ENCODE measurements at regions of chr12 and their contacts with region 1.

Region 1: GRCh38 chr12:56461235-56462159 is 6.9 kb upstream of the SPRYD4 start:
- DNase-seq: no peak
- H3K4me3 Mint-ChIP-seq: no peak overlapping the region
- H3K27ac Mint-ChIP-seq: no peak overlapping the region
- H3K4me1 Mint-ChIP-seq: no peaks in the 10 kb centered on the region
- H3K27me3 Mint-ChIP-seq: no peaks in the 10 kb centered on the region

Region 2: DNA sequence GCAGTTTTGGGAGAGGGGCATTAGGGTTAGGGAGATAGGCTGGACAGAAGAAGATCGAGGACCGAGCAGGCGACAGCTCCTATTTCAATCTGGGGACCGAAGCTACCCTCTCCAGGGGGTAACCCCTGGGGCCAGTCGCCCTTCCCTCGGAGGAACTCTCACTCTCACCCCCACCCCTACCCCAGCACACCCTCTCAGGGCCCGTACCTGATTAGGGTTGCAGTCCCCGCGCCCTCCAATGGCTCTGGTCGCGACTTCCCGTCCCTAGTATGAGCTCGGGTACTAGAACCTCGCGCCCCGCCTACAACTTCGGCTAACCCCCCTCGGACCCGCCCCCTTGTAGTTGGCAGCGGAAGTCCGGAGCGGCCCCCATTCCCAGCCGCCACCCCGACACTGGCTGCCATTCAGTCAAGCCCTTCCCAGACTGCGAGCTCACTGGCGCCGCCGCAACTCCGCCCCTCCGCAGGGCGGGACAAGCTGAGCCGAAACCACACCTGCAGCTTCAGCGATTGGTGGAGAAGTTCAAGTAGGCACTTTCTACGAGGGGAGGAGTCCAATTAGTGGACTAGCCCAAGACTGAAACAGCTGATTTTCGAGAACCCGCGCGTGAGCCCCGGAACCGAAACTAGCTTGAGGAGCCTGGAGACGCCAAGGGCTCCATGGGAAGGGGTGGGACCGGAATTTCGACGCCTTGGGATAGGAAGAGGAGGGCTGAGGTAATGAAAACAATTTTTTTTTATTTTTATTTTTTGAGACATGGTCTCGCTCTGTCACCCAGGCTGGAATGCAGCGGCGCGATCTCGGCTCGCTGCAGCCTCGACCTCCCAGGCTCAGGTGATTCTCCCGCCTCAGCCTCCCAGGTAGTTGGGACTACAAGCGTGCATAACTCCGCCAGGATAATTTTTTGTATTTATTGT is 101.4 kb before region 1 on chr12 and contains the start of gene STAT2:
- intact Hi-C with region 1: loop called (anchors 5 kb)
- DNase-seq: peak; percentile 100
- H3K4me3 Mint-ChIP-seq: peak within 1 kb of the TSS; percentile 89
- H3K27ac Mint-ChIP-seq: peak within 1 kb of the TSS; percentile 90
- H3K4me1 Mint-ChIP-seq: peaks cover 24% of the 10 kb centered on the region
- H3K27me3 Mint-ChIP-seq: no peaks in the 10 kb centered on the region
- total RNA-seq, gene STAT2: 70.3 and 75.0 TPM in 2 replicates

Region 3: GRCh38 chr12:56387152-56387736 is 74.3 kb before region 1 on chr12:
- intact Hi-C with region 1: no loop called
- DNase-seq: no peak
- H3K4me3 Mint-ChIP-seq: no peak overlapping the region
- H3K27ac Mint-ChIP-seq: no peak overlapping the region
- H3K4me1 Mint-ChIP-seq: no peaks in the 10 kb centered on the region
- H3K27me3 Mint-ChIP-seq: no peaks in the 10 kb centered on the region

Region 4: GRCh38 chr12:56831936-56832335 is 370.4 kb after region 1 on chr12:
- intact Hi-C with region 1: no loop called
- DNase-seq: no peak
- H3K4me3 Mint-ChIP-seq: no peak overlapping the region
- H3K27ac Mint-ChIP-seq: no peak overlapping the region
- H3K4me1 Mint-ChIP-seq: peaks cover 9% of the 10 kb centered on the region
- H3K27me3 Mint-ChIP-seq: peaks cover 9% of the 10 kb centered on the region

Measured in activated T-helper 2 cell treated with anti-CD3 and anti-CD28 coated beads, Interferon-gamma antibody, Interleukin-2, Interleukin-4, amounts not matched to agents 10 μg/mL and 5 μg/mL and 100 μg/mL, durations not matched to agents 14 hours and 24 hours and 36 hours (primary cell).